Esophagus squamous epithelium (tissue), 5 donors: ENCODE measurements at regions of chr1 and their contacts with region 1.

Region 1: DNA sequence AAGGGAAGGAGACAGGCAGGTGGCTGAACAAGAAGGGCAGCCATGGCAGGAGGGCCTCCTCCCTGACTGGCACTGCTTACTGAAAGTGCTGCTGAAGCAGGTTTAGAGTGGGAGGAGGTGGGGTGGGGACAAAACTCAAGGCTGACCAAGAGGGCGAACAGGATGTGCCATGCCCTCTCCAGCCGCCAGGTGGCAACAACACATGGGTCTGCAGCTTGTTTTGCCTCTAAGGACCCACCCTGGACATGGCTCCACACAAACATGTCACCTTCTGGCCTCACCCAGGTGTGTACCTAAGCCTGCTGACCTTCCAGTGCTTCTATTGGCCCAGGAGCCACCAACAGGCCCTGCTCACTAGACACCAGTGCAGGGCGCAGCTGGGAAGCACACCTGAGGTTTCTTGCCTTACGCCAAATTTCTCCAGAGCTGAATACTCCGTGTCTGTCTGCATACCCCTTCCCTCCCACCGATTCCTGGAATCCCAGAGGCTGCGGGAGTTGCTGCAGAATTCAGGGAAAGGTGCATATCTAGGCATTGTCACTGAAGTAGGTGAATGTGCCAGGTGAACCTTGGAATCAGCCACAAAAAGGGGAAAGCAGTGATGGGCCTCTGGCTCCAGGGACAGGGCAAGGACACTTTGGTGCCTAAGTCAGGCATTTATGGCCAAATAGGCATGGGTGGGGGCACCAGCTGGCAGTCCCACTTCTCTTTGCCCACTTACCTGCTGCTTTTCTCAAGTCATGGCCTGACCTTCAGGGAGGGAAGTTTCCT is 5.3 kb downstream of the PSRC1 start:
- DNase-seq: peak; percentile 19
- H3K4me3 ChIP-seq: no peak overlapping the region
- H3K27ac ChIP-seq: peak overlapping the region; percentile 59 to 93 (median 86)
- H3K4me1 ChIP-seq: peaks cover 34 to 85% (median 57%) of the 10 kb centered on the region in 3 donors
- H3K27me3 ChIP-seq: no peaks in the 10 kb centered on the region
- CTCF ChIP-seq: peak; percentile 69 to 94 (median 89)
- POLR2A ChIP-seq: no peak

Region 2: DNA sequence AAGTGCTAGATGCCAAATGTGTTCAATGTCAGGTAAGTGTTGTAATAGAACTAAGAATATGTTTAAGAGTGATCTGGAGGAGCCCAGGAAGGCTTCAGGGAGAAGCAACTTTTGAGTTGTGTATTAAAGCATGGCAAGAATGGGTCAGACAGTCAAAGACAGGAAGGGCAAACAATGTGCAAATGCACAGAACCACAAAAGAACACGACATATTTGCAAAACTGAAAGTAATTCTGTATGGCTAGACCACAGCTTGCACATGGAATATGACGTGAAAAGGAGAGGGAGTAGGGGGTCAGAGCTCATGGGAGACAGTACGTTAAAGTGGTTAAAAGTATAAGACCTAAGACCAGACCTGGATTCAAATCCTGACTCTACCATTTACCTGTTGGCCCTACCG is 127.2 kb after region 1 on chr1:
- intact Hi-C with region 1: loop called (anchors 5 kb)
- DNase-seq: no peak
- H3K4me3 ChIP-seq: no peak overlapping the region
- H3K27ac ChIP-seq: no peak overlapping the region
- H3K4me1 ChIP-seq: no peaks in the 10 kb centered on the region
- H3K27me3 ChIP-seq: no peaks in the 10 kb centered on the region
- CTCF ChIP-seq: no peak
- POLR2A ChIP-seq: no peak